Calu3 (cell line): ENCODE measurements at regions of chr3 and their contacts with region 1.

Region 1: GRCh38 chr3:102745882-102746281 is 311.1 kb downstream of the ZPLD1 start:
- DNase-seq: no peak
- H3K4me3 Mint-ChIP-seq: no peak overlapping the region
- H3K27ac Mint-ChIP-seq: no peak overlapping the region
- H3K4me1 Mint-ChIP-seq: no peaks in the 10 kb centered on the region
- H3K27me3 Mint-ChIP-seq: no peaks in the 10 kb centered on the region
- CTCF ChIP-seq: no peak

Region 2: GRCh38 chr3:102790747-102791325 is 45.0 kb after region 1 on chr3:
- CTCF ChIA-PET with region 1: no interaction called
- intact Hi-C with region 1: no loop called
- DNase-seq: no peak
- H3K4me3 Mint-ChIP-seq: no peak overlapping the region
- H3K27ac Mint-ChIP-seq: no peak overlapping the region
- H3K4me1 Mint-ChIP-seq: no peaks in the 10 kb centered on the region
- H3K27me3 Mint-ChIP-seq: no peaks in the 10 kb centered on the region
- CTCF ChIP-seq: no peak

Region 3: GRCh38 chr3:102827386-102827785 is 81.5 kb after region 1 on chr3:
- CTCF ChIA-PET with region 1: no interaction called
- intact Hi-C with region 1: no loop called
- DNase-seq: no peak
- H3K4me3 Mint-ChIP-seq: no peak overlapping the region
- H3K27ac Mint-ChIP-seq: no peak overlapping the region
- H3K4me1 Mint-ChIP-seq: no peaks in the 10 kb centered on the region
- H3K27me3 Mint-ChIP-seq: no peaks in the 10 kb centered on the region
- CTCF ChIP-seq: no peak

Region 4: GRCh38 chr3:103609469-103609868 is 863.6 kb after region 1 on chr3:
- CTCF ChIA-PET with region 1: no interaction called
- intact Hi-C with region 1: loop called (anchors 10 kb)
- DNase-seq: no peak
- H3K4me3 Mint-ChIP-seq: no peak overlapping the region
- H3K27ac Mint-ChIP-seq: no peak overlapping the region
- H3K4me1 Mint-ChIP-seq: no peaks in the 10 kb centered on the region
- H3K27me3 Mint-ChIP-seq: no peaks in the 10 kb centered on the region
- CTCF ChIP-seq: no peak